Left ventricle myocardium inferior (tissue), 1 donor: ENCODE measurements at regions of chr22 and their contacts with region 1.

Region 1: DNA sequence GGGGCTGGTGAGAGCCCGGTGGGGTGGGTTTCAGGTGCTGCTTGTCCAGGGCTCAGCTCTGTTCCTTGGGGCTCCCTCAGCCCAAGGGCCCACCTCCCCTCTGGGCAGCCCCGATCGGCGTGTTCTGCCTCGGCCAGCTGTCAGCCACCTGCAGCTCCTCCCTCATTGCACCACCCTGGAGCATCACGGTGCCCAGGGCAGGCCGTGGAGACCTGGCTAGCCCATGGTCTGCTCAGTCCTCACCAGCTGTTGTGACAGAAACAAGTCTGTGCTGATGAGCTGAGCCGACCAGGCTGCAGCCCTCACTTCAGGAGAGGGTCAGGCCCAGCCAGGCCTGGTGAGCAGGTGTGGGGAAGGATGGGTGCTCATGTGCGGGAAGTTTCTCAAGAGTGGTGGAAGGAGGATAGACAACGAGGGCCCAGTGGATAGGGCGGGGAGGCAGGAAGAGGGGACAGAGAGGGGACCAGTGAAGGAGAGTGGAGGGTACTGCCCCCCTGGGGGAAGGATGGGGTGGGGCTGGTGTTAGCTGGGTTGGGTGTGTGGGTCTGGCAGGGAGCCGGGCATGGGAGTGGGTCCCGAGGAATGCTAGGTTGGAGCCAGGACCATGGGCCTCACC is 16.5 kb upstream of the RTN4R start:
- DNase-seq: no peak
- H3K4me3 ChIP-seq: no peak overlapping the region
- H3K27ac ChIP-seq: no peak overlapping the region
- H3K4me1 ChIP-seq: no peaks in the 10 kb centered on the region
- H3K27me3 ChIP-seq: peaks cover 12% of the 10 kb centered on the region
- CTCF ChIP-seq: no peak

Region 2: GRCh38 chr22:20156611-20157429 is 127.8 kb before region 1 on chr22:
- intact Hi-C with region 1: loop called (anchors 5 kb)
- DNase-seq: peak; percentile 83
- H3K4me3 ChIP-seq: no peak overlapping the region
- H3K27ac ChIP-seq: no peak overlapping the region
- H3K4me1 ChIP-seq: peaks cover 3% of the 10 kb centered on the region
- H3K27me3 ChIP-seq: peaks cover 25% of the 10 kb centered on the region
- CTCF ChIP-seq: peak; percentile 98